Uterus (tissue), 4 donors: ENCODE measurements at regions of chr1 and their contacts with region 1.

Region 1: DNA sequence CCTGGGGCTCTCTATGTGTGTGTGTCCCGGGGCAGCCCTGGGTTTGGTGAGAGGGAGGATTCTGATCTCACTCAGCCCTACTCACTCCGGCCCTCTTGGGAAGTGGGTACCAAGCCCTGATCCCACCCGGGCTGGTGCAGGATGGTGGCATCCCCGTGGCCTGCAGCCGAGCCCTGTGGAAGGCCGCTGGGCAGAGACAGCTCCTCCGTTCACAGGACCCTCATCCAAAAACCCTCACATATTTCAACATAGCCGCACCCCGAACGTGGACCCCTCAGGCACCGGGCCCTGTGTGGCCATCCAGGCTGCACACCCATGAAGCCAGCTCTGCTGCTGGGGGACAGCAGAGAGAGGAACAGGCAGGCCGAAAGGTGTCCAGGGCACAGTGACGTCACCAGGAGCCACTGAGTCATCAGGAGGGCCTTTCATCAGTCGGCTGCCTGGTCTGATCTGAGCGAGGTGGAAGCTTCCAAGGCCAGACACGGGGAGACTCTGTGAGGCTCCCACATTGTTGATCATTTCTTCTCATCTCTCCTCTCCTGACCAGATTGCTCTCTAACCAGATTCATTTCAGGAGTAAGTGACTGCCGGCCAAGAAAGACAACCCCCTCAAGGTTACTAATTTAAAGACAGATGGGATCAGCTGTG is 16.2 kb upstream of the GPR157 start:
- DNase-seq: no peak
- H3K4me3 ChIP-seq: no peak overlapping the region
- H3K27ac ChIP-seq: no peak overlapping the region
- H3K4me1 ChIP-seq: no peaks in the 10 kb centered on the region
- H3K27me3 ChIP-seq: no peaks in the 10 kb centered on the region
- CTCF ChIP-seq: no peak
- POLR2A ChIP-seq: no peak

Region 2: GRCh38 chr1:9196129-9197040 is 51.2 kb after region 1 on chr1:
- intact Hi-C with region 1: loop called (anchors 10 kb)
- DNase-seq: peak; percentile 72 to 76
- H3K4me3 ChIP-seq: no peak overlapping the region
- H3K27ac ChIP-seq: peak overlapping the region; percentile 47 to 57
- H3K4me1 ChIP-seq: no peaks in the 10 kb centered on the region
- H3K27me3 ChIP-seq: no peaks in the 10 kb centered on the region
- CTCF ChIP-seq: peak; percentile 74 to 87 (median 85)
- POLR2A ChIP-seq: no peak

Region 3: GRCh38 chr1:10074059-10074851 is 929.1 kb after region 1 on chr1:
- intact Hi-C with region 1: no loop called
- DNase-seq: peak; percentile 47 to 70
- H3K4me3 ChIP-seq: no peak overlapping the region
- H3K27ac ChIP-seq: peak overlapping the region; percentile 69 to 73
- H3K4me1 ChIP-seq: peaks cover 4% of the 10 kb centered on the region in 2 donors
- H3K27me3 ChIP-seq: no peaks in the 10 kb centered on the region
- CTCF ChIP-seq: no peak
- POLR2A ChIP-seq: no peak